Breast epithelium (tissue), 4 donors: ENCODE measurements at regions of chr6 and their contacts with region 1.

Region 1: DNA sequence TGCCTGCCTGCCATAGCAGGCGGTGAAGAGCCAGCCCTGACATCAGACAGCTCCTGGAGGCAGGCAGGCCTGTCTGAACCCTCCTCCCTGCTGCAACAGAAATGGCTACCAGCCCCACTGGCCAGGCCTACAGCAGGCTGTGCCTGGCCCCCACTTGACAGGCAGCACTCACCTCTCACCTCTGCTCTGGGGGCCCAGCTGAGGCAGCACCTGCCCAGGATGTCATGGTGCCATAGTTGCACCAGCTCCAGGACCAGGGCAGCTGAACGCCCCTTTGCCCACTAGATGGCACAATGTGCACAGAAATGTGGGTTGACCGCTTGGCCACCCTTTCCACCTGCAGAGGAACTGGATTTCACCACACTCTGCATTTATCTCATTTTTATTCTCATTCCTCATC is 30.6 kb downstream of the MRPL14 start:
- DNase-seq: peak; percentile 70 to 81
- H3K4me3 ChIP-seq: no peak overlapping the region
- H3K27ac ChIP-seq: no peak overlapping the region
- H3K4me1 ChIP-seq: no peaks in the 10 kb centered on the region
- H3K27me3 ChIP-seq: no peaks in the 10 kb centered on the region
- CTCF ChIP-seq: peak; percentile 38 to 86 (median 76)
- POLR2A ChIP-seq: no peak

Region 2: DNA sequence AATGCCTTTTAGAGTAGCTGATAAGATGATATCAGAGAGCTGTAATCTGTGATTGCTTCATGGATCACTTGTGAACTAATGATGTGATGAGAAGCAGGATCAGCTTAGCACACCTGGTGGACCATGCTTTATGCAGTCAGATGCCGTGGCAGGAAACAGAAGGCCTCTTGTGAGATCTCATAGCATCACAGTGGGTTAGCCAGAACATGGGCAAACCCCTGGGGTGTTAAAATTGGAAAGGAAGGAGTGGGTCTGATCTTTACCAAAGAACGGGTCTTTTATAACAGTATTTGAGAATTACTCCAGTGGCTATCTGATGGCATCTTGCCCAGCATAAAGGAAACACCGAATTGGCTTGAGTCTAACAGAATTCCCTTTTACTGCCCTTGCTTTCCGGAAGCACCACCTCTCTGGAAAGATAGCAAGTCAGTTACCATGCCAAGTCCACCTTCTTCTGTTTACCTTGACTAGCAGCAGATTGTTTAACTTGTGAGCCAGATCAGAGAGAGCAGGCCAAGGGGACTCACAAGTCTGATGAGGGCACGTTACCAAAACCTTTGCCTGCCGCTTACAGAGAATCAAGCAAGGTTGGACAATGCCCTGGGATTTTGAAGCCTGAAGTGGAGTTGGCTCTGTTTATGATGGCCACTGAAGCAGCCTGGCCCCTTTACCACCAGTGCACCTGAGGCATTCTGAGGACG is 946.4 kb before region 1 on chr6:
- intact Hi-C with region 1: loop called (anchors 5 kb)
- DNase-seq: no peak
- H3K4me3 ChIP-seq: no peak overlapping the region
- H3K27ac ChIP-seq: peak overlapping the region in 1 of 2 donors; percentile 15
- H3K4me1 ChIP-seq: no peaks in the 10 kb centered on the region
- H3K27me3 ChIP-seq: no peaks in the 10 kb centered on the region
- CTCF ChIP-seq: no peak
- POLR2A ChIP-seq: no peak

Region 3: GRCh38 chr6:44151348-44152108 is 54.9 kb after region 1 on chr6:
- intact Hi-C with region 1: loop called (anchors 2 kb)
- DNase-seq: peak; percentile 47 to 74
- H3K4me3 ChIP-seq: peak overlapping the region in 1 of 3 donors; percentile 37
- H3K27ac ChIP-seq: no peak overlapping the region
- H3K4me1 ChIP-seq: no peaks in the 10 kb centered on the region
- H3K27me3 ChIP-seq: no peaks in the 10 kb centered on the region
- CTCF ChIP-seq: peak; percentile 97 to 98 (median 97)
- POLR2A ChIP-seq: no peak

Region 4: GRCh38 chr6:44327096-44327495 is 230.5 kb after region 1 on chr6:
- intact Hi-C with region 1: loop called (anchors 10 kb)
- DNase-seq: no peak
- H3K4me3 ChIP-seq: no peak overlapping the region
- H3K27ac ChIP-seq: no peak overlapping the region
- H3K4me1 ChIP-seq: no peaks in the 10 kb centered on the region
- H3K27me3 ChIP-seq: peaks cover 0 to 9% of the 10 kb centered on the region in 2 donors
- CTCF ChIP-seq: no peak
- POLR2A ChIP-seq: no peak